ENCODE measurements at regions of chr14 and their contacts with region 1.

Region 1: DNA sequence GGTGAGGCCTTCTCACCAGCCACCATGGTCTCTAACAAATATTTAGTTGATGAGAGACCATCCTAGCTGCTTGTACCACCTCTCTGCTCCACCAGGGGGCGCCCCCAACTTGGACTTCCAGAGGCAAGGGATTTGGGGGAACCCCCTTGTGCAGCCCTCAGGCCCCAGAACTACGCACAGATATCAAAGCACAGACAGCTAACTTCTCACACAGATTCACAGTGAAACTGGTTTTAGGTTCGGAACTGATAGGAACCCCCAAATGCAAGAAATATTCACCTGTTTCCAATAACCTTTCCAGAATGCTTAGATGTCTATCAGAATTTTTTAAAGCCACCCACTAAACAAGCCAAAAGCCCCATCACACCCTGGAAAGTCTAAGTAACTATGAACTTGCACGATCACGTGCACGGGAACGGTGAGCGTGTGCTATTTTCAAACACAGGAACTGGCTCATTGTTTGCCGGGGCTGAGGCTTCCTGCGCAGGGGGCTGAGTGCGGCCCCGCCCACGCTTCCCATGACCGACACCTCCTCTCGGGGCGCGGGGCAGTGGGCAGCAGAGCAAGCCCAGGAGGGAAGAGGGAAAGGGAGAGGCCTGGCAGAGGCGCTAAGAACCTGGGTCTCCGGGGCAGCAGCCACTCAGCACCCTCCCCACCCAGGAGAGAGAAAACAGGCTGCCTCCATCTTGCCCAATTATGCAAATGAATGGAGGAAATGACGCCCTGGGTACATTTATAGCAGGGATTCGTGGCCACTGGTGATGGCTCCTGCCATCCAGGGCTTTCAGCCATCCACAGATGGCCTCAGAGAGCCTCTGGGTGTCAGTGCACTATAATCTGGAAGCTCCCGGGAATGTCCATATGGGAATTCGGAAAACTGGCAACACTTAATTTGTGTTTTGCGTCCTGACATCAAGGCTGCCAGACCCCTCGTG is 79.4 kb upstream of the GPR68 start:
- DNase-seq: peak; percentile 82
- CTCF ChIP-seq: peak; percentile 88

Region 2: GRCh38 chr14:91263329-91263728 is 60.6 kb before region 1 on chr14:
- CTCF ChIA-PET with region 1: no interaction called
- POLR2A ChIA-PET with region 1: no interaction called
- DNase-seq: no peak
- CTCF ChIP-seq: no peak

Region 3: GRCh38 chr14:91303091-91303923 is 20.6 kb before region 1 on chr14:
- CTCF ChIA-PET with region 1: interaction called, 10 read pairs
- POLR2A ChIA-PET with region 1: no interaction called
- DNase-seq: peak; percentile 92
- CTCF ChIP-seq: no peak

Region 4: DNA sequence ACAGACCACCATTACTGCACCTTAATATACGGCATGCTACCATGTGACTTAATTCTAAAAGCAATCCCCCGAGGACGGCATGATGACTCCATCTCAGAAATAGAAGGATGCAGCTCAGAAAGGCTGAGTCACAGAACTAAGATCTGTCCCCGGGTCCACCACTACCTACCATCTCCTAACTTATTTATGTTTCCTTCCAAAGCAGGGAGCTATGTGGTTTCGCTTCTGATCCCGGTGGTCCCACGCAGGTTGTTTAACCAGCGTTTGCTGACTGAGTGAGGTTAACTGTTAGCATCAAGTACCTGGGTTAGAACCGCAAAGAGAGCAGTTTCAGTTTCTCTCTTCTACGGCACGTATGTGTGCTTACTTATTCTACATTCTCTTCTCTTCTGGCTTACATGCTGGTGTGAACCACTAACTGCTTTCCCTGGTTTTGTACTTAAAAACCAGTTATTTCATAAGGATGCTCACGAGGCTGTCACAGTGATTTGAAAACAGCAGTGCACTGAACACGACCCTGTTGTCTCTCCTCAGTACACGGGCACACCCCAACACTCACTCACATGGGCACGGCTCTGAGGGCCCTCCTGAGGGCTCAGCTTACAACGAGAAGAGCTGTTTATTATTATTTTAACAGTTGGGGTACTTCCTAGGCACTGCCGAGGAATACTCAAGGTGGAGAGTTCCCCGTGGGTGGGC is 27.0 kb after region 1 on chr14:
- CTCF ChIA-PET with region 1: interaction called, 56 read pairs
- POLR2A ChIA-PET with region 1: interaction called, 4 read pairs
- DNase-seq: peak; percentile 75
- CTCF ChIP-seq: no peak

Region 5: DNA sequence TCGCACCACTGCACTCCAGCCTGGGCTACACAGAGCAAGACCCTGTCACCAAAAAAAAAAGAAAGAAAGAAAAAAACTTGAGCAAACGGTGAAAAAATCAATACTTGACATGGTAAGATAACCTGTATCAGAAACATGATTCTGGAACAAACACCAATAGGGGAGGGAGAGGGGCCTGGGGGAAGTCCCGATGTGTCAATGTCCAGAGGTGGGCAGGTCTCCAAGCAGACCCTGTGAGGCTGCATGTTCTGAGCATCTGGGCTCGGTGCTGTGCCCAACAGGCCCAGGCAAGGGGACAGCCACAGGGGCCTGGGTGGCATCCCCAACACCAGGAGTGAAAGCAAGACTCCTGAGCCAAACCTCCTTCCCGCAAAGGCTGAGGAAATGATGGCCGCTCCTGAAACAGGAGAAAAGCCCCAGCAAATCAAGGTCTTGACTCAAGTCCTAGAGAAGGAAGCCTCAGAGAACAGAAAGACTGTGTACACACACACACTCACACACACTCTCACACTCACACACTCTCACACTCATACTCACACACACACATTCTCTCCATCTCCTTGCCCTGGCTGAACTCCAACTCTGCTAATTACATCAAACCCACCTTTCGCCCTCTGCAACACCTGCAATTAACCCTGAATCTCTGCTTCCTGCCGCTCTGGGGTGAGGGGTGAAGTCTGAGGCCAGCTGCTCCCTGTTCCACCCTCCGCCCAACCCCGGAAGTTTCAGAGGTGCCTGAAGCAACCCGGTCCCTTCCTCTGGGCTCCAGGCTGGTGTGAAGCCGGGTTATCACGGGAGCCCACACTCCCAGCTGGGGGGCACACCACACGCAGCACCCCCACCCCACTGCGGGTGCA is 73.2 kb after region 1 on chr14:
- CTCF ChIA-PET with region 1: interaction called, 32 read pairs
- POLR2A ChIA-PET with region 1: no interaction called
- DNase-seq: peak; percentile 76
- CTCF ChIP-seq: no peak

Region 6: DNA sequence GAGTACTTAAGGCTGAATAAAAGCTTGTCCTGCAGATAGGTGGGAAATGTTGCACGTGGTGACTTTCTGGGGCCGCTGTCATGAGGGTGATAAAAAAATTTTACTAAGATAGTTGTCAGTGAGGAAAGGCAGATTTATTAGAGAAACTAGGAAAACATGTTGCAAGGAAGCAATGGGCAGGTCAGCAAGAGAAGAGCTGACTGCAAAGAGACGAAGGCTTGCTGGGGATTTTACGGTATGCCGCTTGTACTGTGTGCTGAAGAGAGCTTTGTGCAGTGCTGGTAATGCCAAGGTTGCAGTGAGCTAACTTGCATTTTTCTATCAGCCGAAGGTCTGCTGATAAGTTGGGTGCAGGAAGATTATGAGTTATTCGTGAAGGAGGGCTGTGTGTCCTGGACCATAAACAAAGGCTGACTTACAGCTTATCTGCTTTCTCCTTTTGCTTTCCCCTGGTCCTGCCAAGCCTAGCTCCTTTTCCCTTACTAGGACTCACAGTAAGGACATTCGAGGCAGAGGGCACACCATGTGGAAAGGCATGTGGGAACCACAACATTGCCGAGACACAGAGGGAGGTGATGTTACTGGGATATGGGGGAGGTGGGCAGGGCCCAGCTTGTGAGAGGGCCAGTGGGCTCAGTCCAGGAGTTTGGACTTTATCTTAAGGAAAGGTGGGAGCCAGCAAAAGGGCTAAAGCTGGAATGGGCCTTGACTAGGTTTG is 101.0 kb after region 1 on chr14:
- CTCF ChIA-PET with region 1: interaction called, 180 read pairs
- POLR2A ChIA-PET with region 1: no interaction called
- DNase-seq: no peak
- CTCF ChIP-seq: no peak

Region 7: GRCh38 chr14:91444335-91445020 is 120.5 kb after region 1 on chr14:
- CTCF ChIA-PET with region 1: no interaction called
- POLR2A ChIA-PET with region 1: no interaction called
- DNase-seq: no peak
- CTCF ChIP-seq: no peak

Region 8: GRCh38 chr14:91580876-91581577 is 257.1 kb after region 1 on chr14:
- CTCF ChIA-PET with region 1: no interaction called
- POLR2A ChIA-PET with region 1: no interaction called
- DNase-seq: no peak
- CTCF ChIP-seq: no peak

Region 9: DNA sequence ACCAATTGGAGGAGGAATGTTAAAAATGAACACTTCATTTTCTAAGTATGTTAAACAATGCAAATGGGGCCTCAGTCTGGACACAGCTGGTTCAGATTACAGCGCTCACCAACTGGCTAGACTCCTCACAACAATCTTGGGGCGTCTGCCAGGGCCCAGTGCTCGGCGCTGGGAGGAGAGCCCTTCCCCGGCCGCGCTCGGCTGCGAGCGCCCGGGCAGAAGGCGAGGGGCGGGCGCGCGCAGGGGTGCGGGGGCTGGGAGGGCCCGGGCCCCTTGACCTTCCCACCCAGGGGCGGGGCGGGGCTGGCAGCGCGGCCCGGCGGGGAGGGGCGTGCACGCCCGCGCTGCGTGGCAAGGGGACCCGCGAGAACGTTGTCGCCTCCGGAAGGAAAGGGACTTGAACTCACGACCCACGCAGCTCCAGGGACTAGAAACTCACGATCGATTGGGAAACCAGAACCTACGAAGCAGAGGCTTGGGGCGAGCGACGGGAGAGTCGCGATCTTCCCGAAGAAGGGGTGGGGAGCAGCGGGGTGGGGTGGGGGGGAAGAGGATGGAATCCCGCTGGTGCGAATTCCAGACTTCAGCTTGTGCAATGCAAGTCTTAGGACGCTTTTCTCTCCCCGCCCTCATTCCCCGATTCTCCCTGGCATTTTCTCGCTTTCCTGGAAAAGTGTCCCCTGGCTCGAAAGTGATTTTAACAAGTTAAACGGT is 623.7 kb after region 1 on chr14 and contains the start of gene FBLN5:
- CTCF ChIA-PET with region 1: no interaction called
- POLR2A ChIA-PET with region 1: no interaction called
- DNase-seq: no peak
- CTCF ChIP-seq: no peak